B cell (primary cell): ENCODE measurements at regions of chr6 and their contacts with region 1.

Region 1: GRCh38 chr6:144447472-144447871 is 162.3 kb downstream of the UTRN start:
- DNase-seq: no peak
- ATAC-seq: no peak
- H3K4me3 ChIP-seq: no peak overlapping the region
- H3K4me3 Mint-ChIP-seq: no peak overlapping the region
- H3K27ac ChIP-seq: no peak overlapping the region
- H3K27ac Mint-ChIP-seq: no peak overlapping the region
- H3K4me1 ChIP-seq: no peaks in the 10 kb centered on the region
- H3K4me1 Mint-ChIP-seq: no peaks in the 10 kb centered on the region
- H3K27me3 ChIP-seq: no peaks in the 10 kb centered on the region
- H3K27me3 Mint-ChIP-seq: no peaks in the 10 kb centered on the region
- CTCF ChIP-seq: no peak

Region 2: DNA sequence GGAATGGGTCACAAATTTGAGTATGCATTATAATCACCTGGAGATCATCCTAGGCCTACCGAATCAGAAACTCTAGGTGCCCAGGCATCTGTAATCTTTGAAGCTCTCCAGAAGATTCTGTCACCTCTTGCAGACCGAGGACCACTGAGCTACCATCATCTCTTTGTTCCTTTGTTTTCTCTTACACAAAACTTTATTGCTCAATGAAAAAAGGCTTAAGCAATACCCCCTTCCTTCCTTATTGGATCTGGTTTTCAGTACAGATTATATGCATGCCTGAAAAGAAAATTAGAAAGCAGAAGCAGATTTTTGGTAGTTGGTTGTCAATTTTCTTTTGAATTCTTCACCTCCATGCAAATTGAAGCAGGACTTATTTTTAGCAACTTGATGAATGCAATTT is 265.8 kb before region 1 on chr6:
- CTCF ChIA-PET with region 1: no interaction called
- POLR2A ChIA-PET with region 1: interaction called, 11 read pairs
- intact Hi-C with region 1: no loop called
- DNase-seq: no peak
- ATAC-seq: no peak
- H3K4me3 ChIP-seq: no peak overlapping the region
- H3K4me3 Mint-ChIP-seq: no peak overlapping the region
- H3K27ac ChIP-seq: no peak overlapping the region
- H3K27ac Mint-ChIP-seq: no peak overlapping the region
- H3K4me1 ChIP-seq: peaks cover 11 to 14% of the 10 kb centered on the region in 2 donors
- H3K4me1 Mint-ChIP-seq: peaks cover 27% of the 10 kb centered on the region
- H3K27me3 ChIP-seq: no peaks in the 10 kb centered on the region
- H3K27me3 Mint-ChIP-seq: no peaks in the 10 kb centered on the region
- CTCF ChIP-seq: no peak

Region 3: DNA sequence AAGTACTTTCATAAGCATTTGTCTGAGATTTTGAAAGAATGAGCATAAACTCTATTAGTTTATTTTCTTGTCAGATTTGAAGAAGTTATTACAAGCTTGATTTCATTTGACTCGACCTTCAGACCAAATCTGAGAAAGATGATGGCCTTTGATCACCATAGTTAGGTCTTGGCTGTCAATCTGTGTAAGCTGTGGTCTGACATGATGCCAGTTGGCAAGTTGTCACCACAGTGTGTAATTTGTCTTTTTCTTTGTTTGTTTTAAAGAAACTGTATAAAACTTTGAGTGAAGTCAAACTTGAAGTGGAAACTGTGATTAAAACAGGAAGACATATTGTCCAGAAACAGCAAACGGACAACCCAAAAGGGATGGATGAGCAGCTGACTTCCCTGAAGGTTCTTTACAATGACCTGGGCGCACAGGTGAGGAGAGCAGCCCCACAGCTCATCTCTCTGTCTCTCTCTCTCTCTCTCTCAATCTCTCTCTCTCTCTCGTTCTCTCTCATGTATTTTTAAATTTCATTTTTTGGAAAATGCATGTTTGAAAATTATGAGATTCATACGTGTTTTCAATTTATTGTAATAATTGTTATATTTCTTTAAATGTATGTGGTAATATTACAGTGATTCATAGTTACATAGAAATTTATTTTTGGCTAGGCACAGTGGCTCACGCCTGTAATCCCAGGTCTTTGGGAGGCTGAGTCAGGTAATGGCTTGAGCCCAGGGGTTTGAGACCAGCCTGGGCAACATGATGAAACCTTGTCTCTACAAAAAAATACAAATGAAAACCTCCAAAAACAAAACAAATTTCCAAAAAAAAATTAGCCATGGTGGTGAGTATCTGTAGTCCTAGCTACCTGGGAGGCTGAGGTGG is 45.8 kb after region 1 on chr6:
- CTCF ChIA-PET with region 1: no interaction called
- POLR2A ChIA-PET with region 1: no interaction called
- intact Hi-C with region 1: no loop called
- DNase-seq: no peak
- ATAC-seq: no peak
- H3K4me3 ChIP-seq: no peak overlapping the region
- H3K4me3 Mint-ChIP-seq: no peak overlapping the region
- H3K27ac ChIP-seq: no peak overlapping the region
- H3K27ac Mint-ChIP-seq: no peak overlapping the region
- H3K4me1 ChIP-seq: no peaks in the 10 kb centered on the region
- H3K4me1 Mint-ChIP-seq: no peaks in the 10 kb centered on the region
- H3K27me3 ChIP-seq: no peaks in the 10 kb centered on the region
- H3K27me3 Mint-ChIP-seq: no peaks in the 10 kb centered on the region
- CTCF ChIP-seq: no peak